Activated naive CD4-positive, alpha-beta T cell treated with anti-CD3 and anti-CD28 coated beads for 36 hours (primary cell): ENCODE measurements at regions of chr6 and their contacts with region 1.

Region 1: DNA sequence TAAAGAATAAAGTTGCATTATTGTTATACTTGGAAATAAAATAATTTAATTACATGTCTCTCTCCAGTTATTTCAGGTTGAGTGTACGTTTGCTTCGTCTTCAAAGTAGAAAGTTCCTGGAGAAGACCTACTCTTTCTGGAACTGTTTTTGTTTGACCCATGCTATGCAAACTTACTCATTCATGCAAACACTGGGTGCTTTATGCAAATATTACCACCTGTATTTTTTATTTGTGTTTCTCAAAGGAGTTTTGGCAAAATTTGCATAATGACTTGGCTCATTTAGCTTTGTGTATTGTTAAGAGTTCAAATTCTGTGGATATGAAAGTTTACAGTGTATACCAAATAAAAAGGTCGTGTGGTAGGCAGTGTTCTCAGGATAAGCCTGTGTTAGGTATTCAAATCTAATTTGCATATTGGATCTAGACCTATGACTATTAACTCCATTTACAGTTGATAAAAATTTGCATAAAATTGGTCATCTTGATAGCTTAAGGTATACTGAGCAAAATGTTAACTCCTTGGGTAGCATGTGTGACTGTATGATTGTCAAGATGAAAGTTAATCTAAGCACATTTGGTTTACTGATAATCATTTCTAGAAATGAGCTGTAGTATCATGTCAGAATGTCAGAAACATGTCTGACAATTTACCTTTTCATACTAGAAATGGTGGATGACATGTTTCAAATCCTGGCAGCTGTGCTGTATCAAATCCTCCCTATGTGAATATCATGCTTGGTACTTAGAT is 65.2 kb downstream of the CDKAL1 start:
- DNase-seq: no peak
- H3K4me3 Mint-ChIP-seq: no peak overlapping the region
- H3K27ac Mint-ChIP-seq: no peak overlapping the region
- H3K4me1 Mint-ChIP-seq: peaks cover 9% of the 10 kb centered on the region
- H3K27me3 Mint-ChIP-seq: no peaks in the 10 kb centered on the region

Region 2: GRCh38 chr6:20582586-20583446 is 16.7 kb before region 1 on chr6:
- CTCF ChIA-PET with region 1: interaction called, 3 read pairs
- intact Hi-C with region 1: loop called (anchors 1 kb)
- DNase-seq: no peak
- H3K4me3 Mint-ChIP-seq: no peak overlapping the region
- H3K27ac Mint-ChIP-seq: no peak overlapping the region
- H3K4me1 Mint-ChIP-seq: peaks cover 21% of the 10 kb centered on the region
- H3K27me3 Mint-ChIP-seq: no peaks in the 10 kb centered on the region

Region 3: DNA sequence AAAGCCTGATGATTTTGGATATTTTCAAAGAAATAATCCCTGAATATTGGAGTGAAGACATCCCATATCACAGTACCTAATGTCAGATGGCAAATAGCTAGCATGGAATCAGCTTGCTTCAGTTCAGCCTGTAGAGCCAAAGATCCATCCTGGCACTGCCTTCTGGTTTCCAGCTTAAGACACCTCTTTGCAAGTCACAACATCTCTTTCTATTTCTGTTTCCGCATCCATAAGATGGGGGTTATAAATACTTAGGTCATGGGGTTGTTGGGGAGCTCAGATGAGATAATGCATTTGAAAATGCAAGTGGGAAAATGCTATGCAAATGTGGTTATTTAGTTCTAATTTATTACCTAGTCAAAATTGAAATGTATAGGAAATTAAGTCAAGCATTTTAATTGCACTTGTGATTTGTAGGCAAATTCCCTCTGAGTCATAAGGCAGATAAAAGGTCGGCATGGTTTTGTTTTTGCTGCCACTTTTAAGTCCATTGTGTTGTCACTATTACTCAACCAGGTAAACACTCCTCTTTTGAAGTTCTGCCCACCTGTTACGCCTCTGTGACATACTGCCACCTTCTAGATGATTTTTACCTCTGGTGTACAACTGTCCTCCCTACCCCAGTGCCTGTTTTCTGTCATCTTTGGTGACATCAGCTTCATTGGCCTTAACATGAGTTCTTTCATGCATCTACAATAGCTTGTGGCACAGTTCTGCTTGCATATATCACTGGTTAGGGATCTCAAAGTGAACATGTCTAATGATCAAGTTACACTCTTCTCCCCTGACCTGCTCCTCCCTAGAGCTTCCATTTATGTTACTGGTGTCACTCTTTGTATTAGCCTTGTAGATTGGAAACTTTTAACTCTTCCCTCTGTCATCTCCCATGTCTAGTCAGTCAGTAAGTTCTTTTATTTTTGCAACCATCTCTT is 31.4 kb after region 1 on chr6:
- CTCF ChIA-PET with region 1: interaction called, 3 read pairs
- intact Hi-C with region 1: loop called (anchors 1 kb)
- DNase-seq: peak; percentile 46
- H3K4me3 Mint-ChIP-seq: no peak overlapping the region
- H3K27ac Mint-ChIP-seq: peak overlapping the region; percentile 17
- H3K4me1 Mint-ChIP-seq: peaks cover 42% of the 10 kb centered on the region
- H3K27me3 Mint-ChIP-seq: no peaks in the 10 kb centered on the region

Region 4: GRCh38 chr6:20642441-20642840 is 43.0 kb after region 1 on chr6:
- CTCF ChIA-PET with region 1: no interaction called
- intact Hi-C with region 1: no loop called
- DNase-seq: no peak
- H3K4me3 Mint-ChIP-seq: no peak overlapping the region
- H3K27ac Mint-ChIP-seq: no peak overlapping the region
- H3K4me1 Mint-ChIP-seq: peaks cover 3% of the 10 kb centered on the region
- H3K27me3 Mint-ChIP-seq: no peaks in the 10 kb centered on the region